ENCODE measurements at regions of chr22 and their contacts with region 1.

Region 1: GRCh38 chr22:33519071-33519973 is 401.0 kb downstream of the LARGE1 start:
- DNase-seq: no peak
- H3K4me3 ChIP-seq: no peak overlapping the region
- H3K27me3 ChIP-seq: no peaks in the 10 kb centered on the region
- CTCF ChIP-seq: peak; percentile 65

Region 2: DNA sequence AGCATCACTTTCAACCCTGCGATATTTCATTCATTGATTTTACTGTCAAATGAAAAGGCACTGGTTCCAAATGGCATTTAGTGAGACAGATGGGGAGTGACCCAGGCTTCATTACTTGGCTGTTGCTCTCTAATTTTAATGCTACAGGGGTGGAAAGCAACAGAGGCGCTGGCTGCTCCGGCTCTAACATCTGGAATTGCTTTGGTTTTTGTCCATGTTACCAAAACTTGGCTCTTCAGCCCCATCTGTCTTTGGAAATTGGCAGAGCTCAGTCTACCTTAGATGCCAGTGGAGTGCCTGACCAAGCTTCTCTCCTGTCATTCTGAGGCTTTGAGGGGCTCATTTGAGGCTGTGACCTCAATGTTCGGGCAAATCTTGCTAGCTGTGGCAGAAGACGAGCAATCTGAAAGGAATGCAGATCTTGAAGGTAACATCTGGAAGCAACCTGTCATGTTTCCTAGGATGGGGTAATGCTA is 51.7 kb before region 1 on chr22:
- CTCF ChIA-PET with region 1: no interaction called
- POLR2A ChIA-PET with region 1: no interaction called
- DNase-seq: no peak
- H3K4me3 ChIP-seq: no peak overlapping the region
- H3K27me3 ChIP-seq: no peaks in the 10 kb centered on the region
- CTCF ChIP-seq: peak; percentile 49

Region 3: GRCh38 chr22:33504941-33505625 is 14.2 kb before region 1 on chr22:
- CTCF ChIA-PET with region 1: interaction called, 11 read pairs
- POLR2A ChIA-PET with region 1: no interaction called
- DNase-seq: no peak
- H3K4me3 ChIP-seq: no peak overlapping the region
- H3K27me3 ChIP-seq: no peaks in the 10 kb centered on the region
- CTCF ChIP-seq: no peak

Region 4: DNA sequence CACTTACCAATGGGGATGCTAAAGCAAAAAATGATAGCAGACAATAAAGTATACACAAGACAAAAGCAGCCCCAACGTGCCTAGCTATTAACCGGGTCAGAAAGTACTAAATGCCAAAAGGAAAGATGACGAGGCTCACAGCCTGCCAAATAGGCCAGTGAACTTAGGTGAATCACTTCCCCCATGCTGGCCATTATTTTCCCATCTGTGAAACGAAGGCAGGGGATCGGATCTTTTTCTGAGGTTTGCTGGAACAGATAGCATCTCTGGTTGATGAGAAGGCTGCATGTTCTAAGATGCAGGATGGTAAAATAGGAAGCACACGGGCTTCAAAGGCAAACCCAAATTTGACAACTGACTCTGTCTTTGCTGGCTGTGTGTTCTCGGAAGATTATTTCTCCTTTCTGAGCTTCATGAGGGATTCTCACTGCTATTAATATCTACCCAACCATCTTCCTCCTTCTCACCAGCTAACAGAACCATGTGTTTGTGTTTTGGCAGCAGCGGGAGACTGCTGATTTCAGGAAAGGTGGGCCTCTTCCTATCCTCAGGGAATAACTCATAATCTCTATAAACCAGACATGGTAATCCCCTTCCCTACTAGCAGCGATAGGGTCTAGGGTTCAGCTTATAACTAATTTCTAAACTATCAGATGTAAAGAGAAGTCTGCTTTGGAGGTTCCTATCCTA is 10.2 kb after region 1 on chr22:
- CTCF ChIA-PET with region 1: interaction called, 32 read pairs
- POLR2A ChIA-PET with region 1: no interaction called
- DNase-seq: no peak
- H3K4me3 ChIP-seq: no peak overlapping the region
- H3K27me3 ChIP-seq: no peaks in the 10 kb centered on the region
- CTCF ChIP-seq: no peak

Region 5: GRCh38 chr22:33579448-33580093 is 60.2 kb after region 1 on chr22:
- CTCF ChIA-PET with region 1: interaction called, 14 read pairs
- POLR2A ChIA-PET with region 1: no interaction called
- DNase-seq: no peak
- H3K4me3 ChIP-seq: no peak overlapping the region
- H3K27me3 ChIP-seq: no peaks in the 10 kb centered on the region
- CTCF ChIP-seq: peak; percentile 95

Region 6: GRCh38 chr22:33920927-33921524 is 401.7 kb after region 1 on chr22:
- CTCF ChIA-PET with region 1: interaction called, 24 read pairs
- POLR2A ChIA-PET with region 1: no interaction called
- DNase-seq: peak; percentile 79
- H3K4me3 ChIP-seq: peak overlapping the region; percentile 56
- H3K27me3 ChIP-seq: no peaks in the 10 kb centered on the region; the same call in 1 of the 2 replicates
- CTCF ChIP-seq: no peak

Measured in BJ (cell line).